GM18951 (cell line): ENCODE measurements at regions of chr17 and their contacts with region 1.

Region 1: DNA sequence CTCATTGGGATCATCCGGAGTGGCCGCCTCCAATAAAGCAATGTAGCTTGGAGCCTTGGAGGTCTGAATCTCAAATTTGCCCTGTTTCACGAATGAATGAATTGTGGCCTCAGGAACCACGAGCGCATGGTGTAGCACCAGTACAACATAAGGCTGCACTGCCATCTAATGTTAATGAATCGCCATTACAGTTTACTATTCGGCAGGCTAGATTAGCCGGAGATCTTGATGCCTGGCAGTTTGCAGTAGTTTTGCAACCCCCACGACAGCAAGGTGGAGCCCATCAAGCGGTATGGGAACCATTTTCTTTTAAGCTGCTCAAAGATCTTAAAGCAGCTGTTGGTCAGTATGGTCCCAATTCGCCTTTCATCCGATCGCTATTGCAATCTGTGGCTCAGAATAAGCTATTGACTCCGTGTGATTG is 18.8 kb downstream of the ALOX15B start:
- POLR2A ChIP-seq: no peak

Region 2: GRCh38 chr17:7818746-7819645 is 238.7 kb before region 1 on chr17:
- in situ Hi-C with region 1: loop called (anchors 5 kb)
- POLR2A ChIP-seq: no peak

Region 3: DNA sequence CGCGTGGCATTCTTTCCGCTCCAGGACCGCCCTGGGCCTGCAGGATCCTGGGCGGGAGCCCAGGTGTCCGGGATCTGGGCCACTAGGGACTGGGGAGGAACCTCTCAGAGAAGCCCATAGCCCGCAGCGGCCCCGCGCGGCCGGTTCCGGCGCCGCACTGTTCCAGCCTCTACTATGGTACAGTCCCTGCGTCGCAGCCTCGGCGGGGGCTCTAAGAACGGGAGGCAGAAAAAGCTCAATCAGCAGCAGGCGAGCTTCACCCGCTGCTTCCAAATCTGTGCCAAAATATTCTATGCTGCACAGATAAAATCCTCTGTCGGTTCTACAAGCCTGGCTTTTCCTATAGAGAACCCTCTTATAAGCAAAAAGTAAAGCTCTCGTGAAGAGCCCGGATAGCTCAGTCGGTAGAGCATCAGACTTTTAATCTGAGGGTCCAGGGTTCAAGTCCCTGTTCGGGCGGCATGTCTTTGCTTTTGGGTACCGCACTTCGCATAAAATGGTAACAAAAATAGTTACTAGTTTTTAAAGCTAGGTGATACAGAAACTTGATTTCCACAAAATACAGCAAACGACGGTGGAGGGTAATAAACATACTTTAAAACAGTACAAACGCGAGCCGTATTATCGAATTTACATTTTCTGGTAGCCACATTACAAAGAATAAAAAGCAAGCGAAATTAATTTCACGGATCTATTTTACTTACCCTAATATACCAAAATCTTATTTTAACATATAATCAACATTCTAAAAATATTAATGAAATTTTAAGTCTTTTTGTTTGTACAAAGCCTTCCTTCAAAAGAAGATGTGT is 61.3 kb after region 1 on chr17:
- in situ Hi-C with region 1: loop called (anchors 10 kb)
- POLR2A ChIP-seq: no peak